Posterior vena cava (tissue), 2 donors: ENCODE measurements at regions of chr12 and their contacts with region 1.

Region 1: GRCh38 chr12:1761857-1762256 is 58.5 kb upstream of the LRTM2 start:
- DNase-seq: no peak

Region 2: DNA sequence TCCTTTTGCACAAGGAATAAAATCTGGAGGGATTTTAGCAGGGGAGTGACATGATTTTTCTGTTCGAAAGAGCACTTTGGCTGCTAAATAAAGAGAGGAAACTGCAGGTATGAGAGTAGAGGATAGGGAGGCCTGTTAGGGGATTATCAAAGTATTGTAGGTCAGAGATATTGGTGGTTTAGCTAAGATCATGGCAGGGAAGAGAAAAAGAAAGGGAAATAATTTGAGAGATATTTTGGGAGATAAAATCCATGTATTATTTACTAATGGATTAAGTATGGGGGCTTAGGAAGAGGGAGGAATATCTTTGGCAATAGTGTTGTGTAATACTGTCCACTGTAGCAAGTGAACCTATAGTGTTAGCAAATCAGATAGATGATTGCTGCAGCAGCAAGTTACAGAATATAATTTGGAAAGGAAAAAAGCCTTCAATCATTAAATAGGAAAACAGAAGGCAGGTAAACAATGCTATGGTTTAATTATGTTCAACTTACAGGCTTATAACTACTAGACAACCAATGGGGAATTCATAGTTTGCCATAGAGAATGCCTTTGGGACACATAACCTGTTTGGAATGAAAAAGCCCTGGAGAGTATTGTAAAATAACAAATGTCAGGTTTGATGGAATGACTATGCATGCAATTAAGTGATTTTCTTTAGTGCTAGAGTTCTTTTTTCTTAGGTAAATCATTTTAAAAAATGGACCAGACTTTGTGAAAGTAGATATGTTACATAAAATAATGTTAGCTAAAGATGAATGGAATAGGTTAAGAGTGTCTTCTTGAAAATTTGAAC is 20.5 kb before region 1 on chr12:
- intact Hi-C with region 1: loop called in 1 of 2 experiments (anchors 1 kb)
- DNase-seq: no peak